B cell (primary cell): ENCODE measurements at regions of chr9 and their contacts with region 1.

Region 1: GRCh38 chr9:108933718-108934322 is at the start of gene ELP1:
- DNase-seq: peak; percentile 94
- ATAC-seq: peak; percentile 81
- H3K4me3 ChIP-seq: peak within 1 kb of the TSS; percentile 83 to 97 (median 95)
- H3K4me3 Mint-ChIP-seq: peak within 1 kb of the TSS; percentile 97
- H3K27ac ChIP-seq: peak within 1 kb of the TSS; percentile 74 to 81
- H3K27ac Mint-ChIP-seq: peak within 1 kb of the TSS; percentile 95
- H3K4me1 ChIP-seq: peaks cover 16 to 18% of the 10 kb centered on the region in 2 donors
- H3K4me1 Mint-ChIP-seq: peaks cover 17% of the 10 kb centered on the region
- H3K27me3 ChIP-seq: no peaks in the 10 kb centered on the region
- H3K27me3 Mint-ChIP-seq: no peaks in the 10 kb centered on the region
- CTCF ChIP-seq: peak; percentile 26
- total RNA-seq, gene ELP1: 25.8 and 29.4 TPM in 2 replicates

Region 2: GRCh38 chr9:107489687-107490605 is 1443.9 kb before region 1 on chr9 and contains the start of gene KLF4:
- CTCF ChIA-PET with region 1: no interaction called
- POLR2A ChIA-PET with region 1: no interaction called
- intact Hi-C with region 1: loop called (anchors 5 kb)
- DNase-seq: peak; percentile 86
- ATAC-seq: peak; percentile 74
- H3K4me3 ChIP-seq: peak within 1 kb of the TSS; percentile 53 to 86 (median 68)
- H3K4me3 Mint-ChIP-seq: peak within 1 kb of the TSS; percentile 87
- H3K27ac ChIP-seq: peak within 1 kb of the TSS in 1 of 2 donors; percentile 51
- H3K27ac Mint-ChIP-seq: peak within 1 kb of the TSS; percentile 78
- H3K4me1 ChIP-seq: peaks cover 35 to 42% of the 10 kb centered on the region in 2 donors
- H3K4me1 Mint-ChIP-seq: peaks cover 22% of the 10 kb centered on the region
- H3K27me3 ChIP-seq: peaks cover 0 to 51% (median 26%) of the 10 kb centered on the region in 4 experiments
- H3K27me3 Mint-ChIP-seq: peaks cover 49% of the 10 kb centered on the region
- CTCF ChIP-seq: no peak
- total RNA-seq, gene KLF4: 3.7 and 3.8 TPM in 2 replicates

Region 3: GRCh38 chr9:108816037-108816831 is 117.6 kb before region 1 on chr9:
- CTCF ChIA-PET with region 1: no interaction called
- POLR2A ChIA-PET with region 1: no interaction called
- intact Hi-C with region 1: loop called (anchors 5 kb)
- DNase-seq: peak; percentile 33
- ATAC-seq: peak; percentile 58
- H3K4me3 ChIP-seq: peak overlapping the region in 3 of 5 experiments; percentile 5 to 34 (median 29)
- H3K4me3 Mint-ChIP-seq: peak overlapping the region; percentile 75
- H3K27ac ChIP-seq: no peak overlapping the region
- H3K27ac Mint-ChIP-seq: peak overlapping the region; percentile 75
- H3K4me1 ChIP-seq: peaks cover 25 to 32% of the 10 kb centered on the region in 2 donors
- H3K4me1 Mint-ChIP-seq: peaks cover 43% of the 10 kb centered on the region
- H3K27me3 ChIP-seq: no peaks in the 10 kb centered on the region
- H3K27me3 Mint-ChIP-seq: peaks cover 3% of the 10 kb centered on the region
- CTCF ChIP-seq: no peak

Region 4: DNA sequence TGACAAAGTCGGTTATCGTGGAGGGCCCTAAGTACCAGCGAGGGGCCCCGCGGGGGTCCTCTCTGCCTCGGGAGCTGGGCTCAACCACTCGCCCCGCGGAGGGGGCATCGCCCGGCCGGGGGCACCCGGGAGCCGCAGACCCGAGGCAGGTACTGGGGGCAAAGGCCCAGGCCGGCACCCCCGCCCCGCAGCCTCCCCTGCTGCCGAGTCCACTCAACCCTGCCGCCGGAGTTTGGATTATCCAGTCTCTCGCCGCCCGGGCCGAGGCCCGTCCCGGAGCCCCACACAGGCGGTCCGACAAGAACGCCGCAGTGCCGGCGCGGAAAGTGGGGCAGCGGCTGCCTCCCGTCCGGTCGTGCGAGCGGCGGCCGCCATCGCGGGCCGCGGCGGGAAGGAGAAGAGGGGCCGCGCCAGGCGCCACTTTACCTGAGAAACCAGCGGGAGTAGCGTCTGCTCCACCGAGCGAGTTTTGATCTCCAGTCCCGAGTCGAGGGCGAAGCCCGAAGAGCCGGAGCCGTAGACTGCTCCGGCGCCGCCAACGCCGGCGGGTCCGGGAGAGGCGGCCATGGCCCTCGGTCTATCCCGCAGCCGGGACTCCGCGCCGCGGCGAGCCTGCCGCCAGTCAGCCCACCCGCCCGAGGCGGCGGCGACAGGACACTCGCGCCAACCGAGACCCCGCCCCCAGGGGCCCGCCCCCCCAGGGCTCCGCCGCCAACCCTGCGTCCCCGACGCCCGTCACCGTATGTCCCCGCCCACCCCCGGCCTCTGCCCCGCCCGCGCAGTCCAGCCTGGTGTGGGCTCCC is 79.3 kb after region 1 on chr9 and contains the start of gene CTNNAL1:
- CTCF ChIA-PET with region 1: no interaction called
- POLR2A ChIA-PET with region 1: no interaction called
- intact Hi-C with region 1: loop called (anchors 2 kb)
- DNase-seq: peak; percentile 87
- ATAC-seq: peak; percentile 97
- H3K4me3 ChIP-seq: peak within 1 kb of the TSS; percentile 43 to 80 (median 71)
- H3K4me3 Mint-ChIP-seq: peak within 1 kb of the TSS; percentile 94
- H3K27ac ChIP-seq: peak within 1 kb of the TSS; percentile 9 to 50
- H3K27ac Mint-ChIP-seq: peak within 1 kb of the TSS; percentile 90
- H3K4me1 ChIP-seq: peaks cover 16 to 19% of the 10 kb centered on the region in 2 donors
- H3K4me1 Mint-ChIP-seq: peaks cover 42% of the 10 kb centered on the region
- H3K27me3 ChIP-seq: peaks cover 0 to 16% (median 10%) of the 10 kb centered on the region in 4 experiments
- H3K27me3 Mint-ChIP-seq: peaks cover 6% of the 10 kb centered on the region
- CTCF ChIP-seq: no peak
- total RNA-seq, gene CTNNAL1: 1.5 and 2.3 TPM in 2 replicates

Region 5: DNA sequence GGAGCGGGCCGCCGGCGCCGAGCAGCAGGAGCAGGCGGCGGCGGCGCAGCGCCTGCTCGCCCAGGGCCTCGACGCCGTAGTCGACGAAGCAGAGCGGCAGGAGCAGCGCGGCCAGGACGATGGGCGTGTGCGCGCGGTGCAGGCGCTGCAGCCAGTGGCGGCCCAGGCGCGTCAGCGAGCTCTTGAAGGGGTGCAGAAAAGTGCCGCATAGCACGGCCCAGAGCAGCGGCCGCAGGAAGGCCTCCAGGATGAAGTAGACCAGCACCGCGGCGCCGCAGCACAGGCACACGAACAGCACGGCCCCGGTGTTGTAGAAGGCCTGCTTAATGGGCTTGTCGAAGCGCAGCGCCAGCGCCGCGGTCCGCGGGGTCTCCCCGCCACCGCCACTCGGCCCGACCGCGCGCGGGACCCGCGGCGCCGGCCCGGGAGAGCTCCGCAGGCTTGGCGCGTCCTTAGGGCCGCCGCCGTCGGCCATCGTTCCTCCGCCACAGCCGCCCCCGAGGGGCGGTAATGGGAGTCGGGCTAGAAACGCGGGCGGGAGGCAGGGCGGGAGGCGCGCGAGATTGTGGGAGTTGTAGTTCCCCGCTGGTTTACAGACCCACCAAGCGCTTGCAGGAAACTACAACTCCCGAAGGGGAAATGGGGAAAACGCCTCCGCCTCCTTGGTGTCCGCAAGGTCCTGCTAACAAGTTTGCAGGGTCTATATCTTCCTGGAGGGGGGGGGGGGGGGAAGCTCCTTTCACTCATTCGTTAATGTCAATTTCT is 185.8 kb after region 1 on chr9 and contains the start of gene TMEM245:
- CTCF ChIA-PET with region 1: no interaction called
- POLR2A ChIA-PET with region 1: no interaction called
- intact Hi-C with region 1: loop called (anchors 1 kb)
- DNase-seq: peak; percentile 97
- ATAC-seq: peak; percentile 96
- H3K4me3 ChIP-seq: peak within 1 kb of the TSS; percentile 63 to 89 (median 74)
- H3K4me3 Mint-ChIP-seq: peak within 1 kb of the TSS; percentile 91
- H3K27ac ChIP-seq: peak within 1 kb of the TSS; percentile 24 to 81
- H3K27ac Mint-ChIP-seq: peak within 1 kb of the TSS; percentile 86
- H3K4me1 ChIP-seq: peaks cover 18 to 32% of the 10 kb centered on the region in 2 donors
- H3K4me1 Mint-ChIP-seq: peaks cover 30% of the 10 kb centered on the region
- H3K27me3 ChIP-seq: no peaks in the 10 kb centered on the region
- H3K27me3 Mint-ChIP-seq: no peaks in the 10 kb centered on the region
- CTCF ChIP-seq: no peak
- total RNA-seq, gene TMEM245: 33.4 and 34.3 TPM in 2 replicates